ENCODE measurements at regions of chr4 and their contacts with region 1.

Region 1: DNA sequence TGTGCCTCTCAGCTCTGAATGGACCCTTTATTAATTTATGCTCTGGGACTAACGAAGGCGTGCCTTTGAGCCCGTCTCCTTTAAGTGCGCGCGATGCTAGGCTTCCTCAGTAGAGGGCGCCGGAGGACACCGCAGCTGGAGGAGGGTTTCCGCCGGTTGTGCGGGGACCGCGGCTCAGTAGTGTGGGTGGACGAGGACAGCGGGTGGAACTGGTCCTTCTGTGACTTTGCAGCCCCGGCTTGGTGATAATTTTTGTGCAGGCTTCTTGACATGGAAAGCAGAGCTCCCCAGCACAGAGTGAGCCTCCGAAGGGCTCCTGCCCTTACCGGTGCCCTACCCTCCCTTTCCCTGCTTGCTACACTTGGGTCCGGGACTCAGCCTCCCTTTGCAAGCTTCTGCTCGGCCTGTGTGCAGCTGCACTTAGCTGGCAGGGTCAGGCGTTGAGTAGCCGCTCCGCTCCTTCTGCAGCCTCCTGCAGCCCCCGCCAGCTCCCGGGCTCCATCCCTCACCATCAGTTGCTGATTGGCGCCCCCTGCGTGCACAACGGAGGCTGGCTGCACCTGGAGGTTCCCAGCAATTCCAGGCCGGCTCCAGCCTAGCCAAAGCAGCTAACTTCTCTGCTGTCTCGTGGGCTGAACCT is 26.8 kb upstream of the BOD1L1 start:
- DNase-seq: peak; percentile 95
- H3K4me3 Mint-ChIP-seq: peak overlapping the region; percentile 84
- H3K27ac Mint-ChIP-seq: no peak overlapping the region
- H3K4me1 Mint-ChIP-seq: peaks cover 14% of the 10 kb centered on the region
- H3K27me3 Mint-ChIP-seq: peaks cover 6% of the 10 kb centered on the region

Region 2: GRCh38 chr4:13067077-13067476 is 587.2 kb before region 1 on chr4:
- intact Hi-C with region 1: no loop called
- DNase-seq: no peak
- H3K4me3 Mint-ChIP-seq: no peak overlapping the region
- H3K27ac Mint-ChIP-seq: no peak overlapping the region
- H3K4me1 Mint-ChIP-seq: no peaks in the 10 kb centered on the region
- H3K27me3 Mint-ChIP-seq: no peaks in the 10 kb centered on the region

Region 3: DNA sequence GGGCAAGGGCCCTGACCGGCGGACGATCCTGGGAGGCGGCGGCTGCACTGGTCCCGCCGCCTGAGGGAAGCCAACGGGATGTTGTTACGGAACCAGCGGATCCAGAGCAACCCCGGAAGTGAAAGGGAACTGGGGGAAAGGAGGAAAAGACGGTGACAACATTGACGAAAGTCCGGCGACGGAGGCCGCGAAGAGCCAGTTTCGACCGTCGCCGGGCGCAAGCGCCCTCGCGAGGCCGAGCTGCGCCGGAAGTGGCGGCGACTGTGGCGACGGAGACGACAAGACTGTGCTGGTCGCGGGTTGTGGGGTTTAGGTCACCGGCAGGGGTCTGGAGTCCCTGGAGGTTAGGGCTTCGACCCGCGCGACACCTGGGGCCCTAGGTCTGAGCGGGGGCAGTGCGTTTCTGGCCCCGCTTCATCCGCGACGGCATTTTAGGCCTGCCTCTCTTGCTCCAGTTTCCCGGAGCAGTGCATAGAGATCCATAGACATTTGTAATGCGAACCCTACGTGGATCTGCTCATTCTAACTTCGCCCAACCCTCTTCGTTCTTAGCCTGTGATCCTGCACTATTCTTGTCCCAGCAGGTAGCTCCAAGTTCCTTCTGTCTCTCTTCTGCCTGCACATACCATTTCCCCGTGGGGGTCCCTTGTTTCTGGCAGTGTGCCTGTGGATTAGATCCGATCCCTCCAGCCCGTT is 26.5 kb before region 1 on chr4 and contains the start of gene BOD1L1:
- intact Hi-C with region 1: loop called (anchors 1 kb)
- DNase-seq: peak; percentile 95
- H3K4me3 Mint-ChIP-seq: peak within 1 kb of the TSS; percentile 97
- H3K27ac Mint-ChIP-seq: peak within 1 kb of the TSS; percentile 99
- H3K4me1 Mint-ChIP-seq: peaks cover 13% of the 10 kb centered on the region
- H3K27me3 Mint-ChIP-seq: no peaks in the 10 kb centered on the region
- total RNA-seq, gene BOD1L1: 38.3 and 41.0 TPM in 2 replicates

Region 4: GRCh38 chr4:14178421-14178820 is 524.1 kb after region 1 on chr4:
- intact Hi-C with region 1: loop called (anchors 10 kb)
- DNase-seq: peak; percentile 63
- H3K4me3 Mint-ChIP-seq: peak overlapping the region; percentile 58
- H3K27ac Mint-ChIP-seq: peak overlapping the region; percentile 49
- H3K4me1 Mint-ChIP-seq: peaks cover 21% of the 10 kb centered on the region
- H3K27me3 Mint-ChIP-seq: no peaks in the 10 kb centered on the region

Region 5: DNA sequence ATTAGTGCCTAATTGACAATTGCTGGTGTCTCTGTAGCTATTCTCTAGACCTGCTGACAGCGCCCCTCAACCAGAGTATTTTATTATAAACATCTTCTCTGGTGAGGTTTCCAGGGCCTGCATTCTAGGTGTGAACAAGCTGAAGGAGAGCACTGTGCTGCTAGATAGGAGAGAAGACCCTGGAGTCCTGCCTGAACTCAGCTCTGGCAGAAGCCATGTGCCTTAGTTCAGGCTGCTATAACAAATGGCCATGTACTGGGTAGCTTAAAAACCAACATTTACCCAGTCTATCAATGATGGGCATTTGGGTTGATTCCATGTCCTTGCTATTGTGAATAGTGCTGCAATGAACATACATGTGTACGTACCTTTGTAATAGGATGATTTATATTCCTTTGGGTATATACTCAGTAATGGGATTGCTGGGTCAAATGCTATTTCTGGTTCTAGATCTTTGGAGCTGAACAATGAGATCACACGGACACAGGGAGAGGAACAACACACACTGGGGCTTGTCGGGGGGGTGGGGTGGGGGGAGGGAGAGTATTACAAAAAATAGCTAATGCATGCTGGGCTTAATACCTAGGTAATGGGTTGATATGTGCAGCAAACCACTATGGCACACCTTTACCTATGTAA is 1162.5 kb after region 1 on chr4:
- intact Hi-C with region 1: no loop called
- DNase-seq: no peak
- H3K4me3 Mint-ChIP-seq: no peak overlapping the region
- H3K27ac Mint-ChIP-seq: no peak overlapping the region
- H3K4me1 Mint-ChIP-seq: no peaks in the 10 kb centered on the region
- H3K27me3 Mint-ChIP-seq: no peaks in the 10 kb centered on the region

Region 6: DNA sequence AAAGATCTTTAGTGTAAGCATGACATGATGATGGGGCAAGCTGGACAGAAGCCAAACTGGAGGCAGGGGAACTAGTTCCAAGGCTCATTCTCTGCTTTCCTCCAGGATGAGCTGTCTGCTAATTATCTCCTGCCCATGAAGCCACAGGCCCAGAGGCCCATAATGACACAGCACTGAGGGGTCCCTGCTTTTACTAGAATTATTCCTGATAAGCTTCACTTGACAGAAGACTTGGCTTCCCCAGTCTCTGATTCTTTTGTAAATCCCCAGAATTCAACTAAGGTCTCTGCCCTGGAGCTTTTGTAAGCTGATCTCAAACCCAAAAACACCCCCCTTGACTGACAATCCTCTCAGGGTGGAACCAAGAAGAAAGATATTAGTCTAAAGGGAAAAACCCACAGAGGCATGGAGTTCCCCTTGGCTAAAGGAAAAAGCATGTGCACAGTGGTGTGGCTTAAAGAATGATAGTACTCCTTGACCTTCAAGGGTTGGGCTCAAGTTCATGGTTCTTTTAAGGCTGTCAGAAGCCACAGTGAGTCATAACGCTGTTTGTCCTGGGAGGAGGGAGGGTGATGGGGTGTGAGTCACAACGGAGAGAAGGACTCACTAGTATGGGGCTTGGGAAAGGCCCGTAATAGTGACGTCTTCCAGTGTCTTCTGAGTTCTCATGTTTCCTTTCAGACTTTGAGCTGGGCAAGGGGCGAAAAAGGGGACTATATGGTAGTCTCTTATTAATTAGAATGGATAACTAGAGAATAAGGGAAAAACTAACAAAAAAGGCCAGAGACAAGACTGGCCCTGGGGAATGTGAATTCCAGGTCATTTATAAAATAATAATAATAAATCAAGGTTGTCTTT is 1202.0 kb after region 1 on chr4:
- intact Hi-C with region 1: loop called (anchors 10 kb)
- DNase-seq: peak; percentile 83
- H3K4me3 Mint-ChIP-seq: peak overlapping the region; percentile 48
- H3K27ac Mint-ChIP-seq: peak overlapping the region; percentile 90
- H3K4me1 Mint-ChIP-seq: peaks cover 19% of the 10 kb centered on the region
- H3K27me3 Mint-ChIP-seq: no peaks in the 10 kb centered on the region

Region 7: GRCh38 chr4:15162465-15163283 is 1508.4 kb after region 1 on chr4:
- intact Hi-C with region 1: loop called (anchors 10 kb)
- DNase-seq: no peak
- H3K4me3 Mint-ChIP-seq: no peak overlapping the region
- H3K27ac Mint-ChIP-seq: no peak overlapping the region
- H3K4me1 Mint-ChIP-seq: no peaks in the 10 kb centered on the region
- H3K27me3 Mint-ChIP-seq: peaks cover 14% of the 10 kb centered on the region

Region 8: DNA sequence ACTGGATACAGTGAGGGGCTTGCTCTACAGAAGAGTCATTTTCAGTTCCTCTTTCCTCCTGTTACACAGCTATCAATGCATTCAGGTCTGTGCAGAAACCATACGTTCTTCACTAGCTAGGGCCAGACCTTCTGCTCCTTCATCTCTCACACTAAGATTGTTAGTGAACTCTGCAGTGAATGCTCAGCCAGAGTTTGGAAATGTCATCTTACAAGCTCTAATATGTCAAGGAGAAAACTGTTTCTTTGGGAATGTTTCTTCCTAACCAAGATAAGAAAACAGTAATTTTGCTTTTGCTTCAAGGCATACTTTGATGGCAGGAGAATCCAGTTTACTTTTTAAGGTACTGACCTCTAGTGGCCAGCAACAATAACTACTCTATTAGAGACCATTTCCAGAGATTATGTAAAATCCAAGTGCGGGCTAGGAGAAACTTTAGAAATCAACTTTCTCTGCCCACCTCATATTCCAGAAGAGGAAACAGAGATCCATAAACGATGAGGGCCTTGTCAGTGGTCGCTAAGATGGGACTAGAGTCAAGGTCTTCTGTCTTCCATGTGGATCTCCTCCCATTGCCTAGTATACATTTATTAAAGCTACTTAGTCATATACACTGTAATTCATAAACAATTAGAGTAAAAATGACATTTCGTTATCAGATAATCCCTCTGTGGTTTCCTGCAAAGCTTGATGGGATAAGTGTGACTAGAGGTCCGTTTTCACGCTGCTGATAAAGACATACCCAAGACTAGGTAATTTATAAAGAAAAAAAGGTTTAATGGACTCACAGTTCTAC is 1803.3 kb after region 1 on chr4:
- intact Hi-C with region 1: loop called (anchors 10 kb)
- DNase-seq: peak; percentile 59
- H3K4me3 Mint-ChIP-seq: no peak overlapping the region
- H3K27ac Mint-ChIP-seq: no peak overlapping the region
- H3K4me1 Mint-ChIP-seq: no peaks in the 10 kb centered on the region
- H3K27me3 Mint-ChIP-seq: peaks cover 24% of the 10 kb centered on the region